Dorsolateral prefrontal cortex (tissue), 120 donors: ENCODE measurements at regions of chr3 and their contacts with region 1.

Region 1: GRCh38 chr3:56988458-56989168 is 71.9 kb upstream of the SPATA12 start:
- DNase-seq: peak; percentile 58 to 89 (median 84)
- H3K4me3 ChIP-seq: peak overlapping the region in 18 of 59 donors; percentile 2 to 38 (median 18)
- H3K27ac ChIP-seq: peak overlapping the region in 42 of 59 donors; percentile 1 to 81 (median 47)
- H3K27me3 ChIP-seq: no peaks in the 10 kb centered on the region
- CTCF ChIP-seq: peak; percentile 86 to 99 (median 95)

Region 2: DNA sequence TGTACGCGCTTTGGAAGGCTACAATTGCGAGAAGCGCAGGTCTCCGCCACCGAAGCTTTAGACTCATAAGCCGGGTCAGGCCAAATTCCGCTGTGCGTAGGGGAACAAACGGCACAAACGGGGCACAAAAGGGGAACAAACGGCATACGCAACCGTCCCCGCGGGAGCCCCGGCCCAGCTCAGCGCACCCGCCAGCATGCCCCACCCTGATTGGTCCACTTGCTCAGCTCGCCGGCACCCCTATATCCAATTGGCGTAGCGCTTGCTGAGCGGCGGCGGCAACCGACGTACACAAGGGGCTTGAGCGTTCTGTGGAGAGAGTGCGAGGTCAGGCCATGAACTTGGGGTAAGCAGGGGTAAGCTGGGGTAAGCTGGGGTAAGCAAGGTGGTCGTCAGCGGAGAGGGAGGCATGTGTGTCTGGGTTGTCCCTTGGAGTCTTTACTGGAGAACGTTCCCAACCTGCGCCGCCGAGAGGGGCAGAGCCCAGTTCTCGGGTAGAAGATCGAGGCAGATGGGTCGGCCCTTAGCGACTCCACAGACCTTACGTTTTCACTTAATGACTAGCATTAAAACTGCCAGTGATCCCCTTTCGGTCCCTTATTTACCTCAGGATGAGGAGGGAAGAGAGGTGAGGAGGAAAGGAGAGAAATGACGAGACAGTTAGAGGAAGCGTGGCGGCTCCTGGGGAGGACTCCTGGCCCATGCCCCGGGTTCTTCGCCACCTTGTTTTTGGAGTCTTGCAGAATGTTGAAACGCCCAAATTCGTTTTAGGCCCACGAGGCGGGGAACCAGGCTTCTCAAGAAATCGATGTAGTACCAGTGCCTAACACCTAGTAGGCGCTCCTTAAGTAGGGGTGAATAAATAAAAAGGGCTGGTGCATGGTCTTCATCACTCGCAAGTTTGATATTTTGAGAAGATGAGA is 431.4 kb before region 1 on chr3 and contains the start of gene CCDC66:
- intact Hi-C with region 1: loop called in 1 of 2 experiments (anchors 5 kb)
- DNase-seq: peak; percentile 85 to 96 (median 95)
- H3K4me3 ChIP-seq: peak within 1 kb of the TSS; percentile 67 to 97 (median 85)
- H3K27ac ChIP-seq: peak within 1 kb of the TSS in 57 of 59 donors; percentile 1 to 89 (median 74)
- H3K27me3 ChIP-seq: no peaks in the 10 kb centered on the region
- CTCF ChIP-seq: peak; percentile 25 to 77 (median 60)
- total RNA-seq, gene CCDC66: 35.3 to 94.7 (median 60.8) TPM

Region 3: DNA sequence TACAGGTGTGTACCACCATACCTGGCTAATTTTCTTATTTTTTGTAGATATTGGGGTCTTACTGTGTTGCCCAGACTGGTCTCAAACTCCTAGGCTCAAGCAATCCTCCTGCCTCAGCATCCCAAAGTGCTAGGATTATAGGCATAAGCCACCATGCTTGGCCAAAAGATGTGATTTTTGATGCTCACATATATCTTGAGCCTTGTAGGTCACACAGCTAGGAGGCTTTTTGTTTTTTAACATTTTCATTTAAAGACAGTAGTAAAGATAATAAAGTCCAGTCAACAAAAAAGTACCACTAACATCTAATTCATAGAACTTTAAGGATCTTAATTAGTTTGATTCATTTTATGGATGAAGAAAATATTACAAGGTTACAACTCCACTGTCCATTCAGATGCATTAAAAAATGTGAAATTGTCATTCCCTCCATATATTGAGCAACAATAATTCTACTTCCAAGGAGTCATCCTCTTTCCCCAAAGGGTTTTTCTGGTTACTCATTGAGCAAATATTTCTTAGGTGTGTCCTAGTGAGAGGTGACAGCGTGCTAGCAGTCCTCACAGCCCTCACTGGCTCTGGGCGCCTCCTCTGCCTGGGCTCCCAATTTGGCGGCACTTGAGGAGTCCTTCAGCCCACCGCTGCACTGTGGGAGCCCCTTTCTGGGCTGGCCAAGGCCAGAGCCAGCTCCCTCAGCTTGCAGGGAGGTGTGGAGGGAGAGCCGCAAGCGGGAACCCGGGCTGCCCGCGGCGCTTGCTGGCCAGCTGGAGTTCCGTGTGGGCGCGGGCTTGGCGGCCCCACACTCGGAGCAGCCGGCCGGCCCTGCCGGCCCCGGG is 297.2 kb before region 1 on chr3:
- intact Hi-C with region 1: no loop called
- DNase-seq: no peak
- H3K4me3 ChIP-seq: no peak overlapping the region
- H3K27ac ChIP-seq: no peak overlapping the region
- H3K27me3 ChIP-seq: no peaks in the 10 kb centered on the region
- CTCF ChIP-seq: no peak

Region 4: GRCh38 chr3:56702490-56703315 is 285.9 kb before region 1 on chr3:
- intact Hi-C with region 1: loop called (anchors 1 to 2 kb)
- DNase-seq: peak in 2 of 10 donors; percentile 52 to 53
- H3K4me3 ChIP-seq: peak overlapping the region in 10 of 59 donors; percentile 7 to 35 (median 27)
- H3K27ac ChIP-seq: no peak overlapping the region
- H3K27me3 ChIP-seq: no peaks in the 10 kb centered on the region
- CTCF ChIP-seq: peak; percentile 76 to 100 (median 94)

Region 5: GRCh38 chr3:56855856-56856512 is 132.6 kb before region 1 on chr3:
- intact Hi-C with region 1: loop called (anchors 5 kb)
- DNase-seq: peak; percentile 5 to 77 (median 62)
- H3K4me3 ChIP-seq: peak overlapping the region in 5 of 59 donors; percentile 4 to 21 (median 10)
- H3K27ac ChIP-seq: peak overlapping the region in 43 of 59 donors; percentile 2 to 86 (median 57)
- H3K27me3 ChIP-seq: no peaks in the 10 kb centered on the region
- CTCF ChIP-seq: peak; percentile 44 to 88 (median 66)